Endothelial cell of umbilical vein (primary cell): ENCODE measurements at regions of chr17 and their contacts with region 1.

Region 1: GRCh38 chr17:38982858-38983746 is 15.9 kb upstream of the FBXO47 start:
- DNase-seq: peak; percentile 74
- H3K4me3 ChIP-seq: no peak overlapping the region
- H3K27ac ChIP-seq: no peak overlapping the region
- H3K4me1 ChIP-seq: no peaks in the 10 kb centered on the region
- H3K27me3 ChIP-seq: no peaks in the 10 kb centered on the region
- CTCF ChIP-seq: peak; percentile 62 to 63
- POLR2A ChIP-seq: no peak

Region 2: DNA sequence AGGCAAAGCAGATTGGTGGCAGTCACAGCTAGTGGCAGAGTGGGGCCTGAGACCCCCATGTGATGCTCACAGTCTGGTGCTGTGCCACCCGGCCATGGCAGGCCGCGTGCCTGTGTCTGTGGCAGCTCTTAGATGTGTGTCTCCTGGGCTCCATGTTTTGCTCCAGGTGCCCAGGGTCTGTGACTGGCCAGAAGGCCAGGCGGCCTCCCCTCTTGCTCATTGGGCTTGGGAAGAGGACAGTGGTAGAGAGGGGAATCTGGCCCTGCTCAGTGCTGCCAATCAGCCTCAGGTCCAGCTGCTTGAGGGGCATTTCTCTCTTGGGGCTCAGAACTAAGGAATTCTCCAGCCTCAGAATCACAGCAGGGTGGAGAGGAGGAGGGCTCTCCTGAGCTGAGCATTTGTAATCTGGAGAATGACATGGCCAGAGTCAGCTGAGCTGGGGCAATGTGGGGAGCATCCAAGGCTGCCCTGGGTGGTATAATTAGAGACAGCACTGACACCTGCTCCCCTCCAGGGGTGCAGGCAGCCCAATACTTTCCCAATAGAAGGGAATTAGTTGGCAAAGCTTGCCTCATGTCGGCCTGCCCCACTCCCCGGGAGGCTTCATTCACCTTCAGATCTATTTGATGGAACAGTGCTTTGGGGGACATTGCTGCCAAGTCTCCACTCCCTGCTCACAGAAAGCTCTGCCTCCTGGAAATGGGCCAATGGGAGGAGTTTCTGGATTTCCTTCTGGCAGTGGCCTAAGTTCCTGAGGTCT is 60.4 kb before region 1 on chr17:
- CTCF ChIA-PET with region 1: interaction called, 41 read pairs
- POLR2A ChIA-PET with region 1: no interaction called
- dilution Hi-C with region 1: no loop called
- intact Hi-C with region 1: no loop called
- DNase-seq: peak; percentile 67
- H3K4me3 ChIP-seq: no peak overlapping the region
- H3K27ac ChIP-seq: no peak overlapping the region
- H3K4me1 ChIP-seq: no peaks in the 10 kb centered on the region
- H3K27me3 ChIP-seq: no peaks in the 10 kb centered on the region
- CTCF ChIP-seq: peak in 1 of 2 donors; percentile 9
- POLR2A ChIP-seq: peak; percentile 16

Region 3: DNA sequence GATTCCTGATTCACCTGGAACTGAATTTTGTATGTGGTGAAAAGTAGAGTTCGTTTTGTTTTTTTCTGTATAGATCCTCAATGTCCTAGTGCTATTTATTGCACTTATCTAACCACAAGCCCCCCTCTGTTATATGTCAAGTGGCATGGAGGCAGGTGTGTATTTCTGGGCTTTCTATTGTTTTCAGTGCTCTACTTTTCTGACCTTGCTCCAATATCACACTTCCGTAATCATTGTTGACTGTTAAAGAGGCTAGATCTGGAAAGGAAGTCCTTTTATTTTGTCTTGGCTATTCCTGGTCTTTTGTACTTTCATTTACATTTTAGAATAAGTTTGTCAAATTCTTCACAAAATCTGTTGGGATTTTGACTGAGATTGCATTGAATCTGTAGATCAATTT is 10.9 kb after region 1 on chr17:
- CTCF ChIA-PET with region 1: interaction called, 22 read pairs
- POLR2A ChIA-PET with region 1: no interaction called
- dilution Hi-C with region 1: no loop called
- intact Hi-C with region 1: no loop called
- DNase-seq: peak; percentile 57
- H3K4me3 ChIP-seq: no peak overlapping the region
- H3K27ac ChIP-seq: no peak overlapping the region
- H3K4me1 ChIP-seq: peaks cover 6% of the 10 kb centered on the region
- H3K27me3 ChIP-seq: no peaks in the 10 kb centered on the region
- CTCF ChIP-seq: no peak
- POLR2A ChIP-seq: no peak

Region 4: DNA sequence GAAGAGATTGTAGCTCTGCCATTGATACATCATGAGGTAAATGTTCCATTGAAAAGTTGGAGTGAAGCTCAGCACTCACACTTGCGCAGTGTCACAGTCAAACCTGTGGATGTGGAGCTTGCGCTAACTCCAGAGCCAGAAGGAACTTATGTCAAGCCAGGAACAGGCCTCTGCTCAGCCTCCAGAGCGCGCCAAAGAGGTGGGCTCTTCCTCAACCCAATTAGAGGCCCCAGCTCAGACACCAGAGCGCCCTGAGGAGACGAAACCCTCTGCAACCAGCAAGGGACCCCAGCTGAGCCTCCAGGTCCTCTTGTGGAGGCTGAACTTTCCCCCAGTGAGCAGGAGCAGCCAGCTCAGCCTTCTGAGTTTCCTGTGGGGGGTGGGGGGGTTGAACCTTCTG is 45.6 kb after region 1 on chr17:
- CTCF ChIA-PET with region 1: interaction called, 14 read pairs
- POLR2A ChIA-PET with region 1: no interaction called
- dilution Hi-C with region 1: no loop called
- intact Hi-C with region 1: no loop called
- DNase-seq: no peak
- H3K4me3 ChIP-seq: no peak overlapping the region
- H3K27ac ChIP-seq: no peak overlapping the region
- H3K4me1 ChIP-seq: no peaks in the 10 kb centered on the region
- H3K27me3 ChIP-seq: peaks cover 26 to 31% of the 10 kb centered on the region in 2 experiments
- CTCF ChIP-seq: no peak
- POLR2A ChIP-seq: no peak

Region 5: DNA sequence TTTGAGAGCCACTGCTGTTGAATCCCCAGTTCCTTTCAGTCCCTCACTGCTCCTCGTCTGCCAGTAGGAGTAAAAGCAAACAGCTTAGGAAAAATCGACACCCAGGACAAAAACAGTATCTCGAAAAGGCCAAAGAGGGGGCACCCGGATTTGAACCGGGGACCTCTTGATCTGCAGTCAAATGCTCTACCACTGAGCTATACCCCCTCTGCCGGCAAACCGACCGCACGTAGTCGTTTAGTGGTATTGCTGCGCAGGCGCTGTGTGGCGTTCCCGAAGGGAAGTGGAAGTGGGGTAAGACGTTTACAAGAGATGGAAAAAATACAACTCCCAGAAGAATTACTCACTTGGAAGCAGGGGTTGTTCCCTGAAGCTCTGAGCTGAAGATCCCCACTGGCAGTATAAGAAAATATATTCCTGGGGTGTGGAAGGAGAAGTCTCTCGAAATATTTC is 170.5 kb after region 1 on chr17:
- CTCF ChIA-PET with region 1: interaction called, 550 read pairs
- POLR2A ChIA-PET with region 1: interaction called, 6 read pairs
- dilution Hi-C with region 1: no loop called
- intact Hi-C with region 1: loop called (anchors 1 kb)
- DNase-seq: peak; percentile 93
- H3K4me3 ChIP-seq: peak overlapping the region; percentile 35 to 82 (median 68)
- H3K27ac ChIP-seq: peak overlapping the region; percentile 0
- H3K4me1 ChIP-seq: peaks cover 8% of the 10 kb centered on the region
- H3K27me3 ChIP-seq: peaks cover 19 to 27% of the 10 kb centered on the region in 2 experiments
- CTCF ChIP-seq: peak in 1 of 2 donors; percentile 4
- POLR2A ChIP-seq: no peak

Region 6: DNA sequence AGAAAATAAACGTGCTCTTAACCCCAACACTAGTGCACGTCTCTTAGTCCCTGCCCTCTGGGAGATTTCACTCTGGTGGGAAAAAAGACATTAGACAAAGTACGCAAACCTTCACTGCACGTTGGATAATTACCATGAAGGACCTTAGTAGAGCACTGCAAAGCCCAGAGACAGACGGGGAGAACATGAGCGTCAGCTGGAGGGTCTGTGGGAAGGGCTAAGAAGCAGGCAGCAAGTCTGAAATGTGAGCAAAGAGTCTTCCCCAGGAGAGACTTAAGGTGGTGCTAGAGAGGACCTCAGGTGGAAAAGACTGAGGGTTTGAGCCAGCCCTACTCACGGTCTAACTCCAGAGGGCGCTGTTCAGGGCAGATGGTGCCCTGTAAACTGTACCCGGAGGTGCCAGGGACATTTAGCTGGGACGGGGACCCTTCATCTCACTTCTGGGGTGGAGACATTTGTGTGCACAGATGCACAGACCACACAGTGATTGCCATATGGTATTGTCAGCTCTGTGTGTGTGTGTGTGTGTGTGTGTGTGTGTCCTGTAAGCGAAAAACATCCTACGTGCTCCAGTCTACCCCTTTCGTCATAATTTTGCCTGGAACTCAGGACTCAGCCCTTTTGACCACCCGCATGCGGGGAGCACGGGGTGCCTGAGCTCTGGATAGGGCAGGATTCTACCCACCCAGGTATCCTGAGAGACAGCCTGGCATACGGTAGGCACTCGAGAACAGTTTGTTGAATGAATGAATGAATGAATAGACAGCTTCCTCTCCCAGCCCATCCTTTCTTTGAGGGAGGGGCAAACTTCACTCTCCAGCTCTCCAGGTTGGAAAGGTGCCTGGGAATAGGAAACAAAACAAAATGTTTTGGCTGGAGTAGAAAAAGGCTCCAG is 252.7 kb after region 1 on chr17:
- CTCF ChIA-PET with region 1: interaction called, 52 read pairs
- POLR2A ChIA-PET with region 1: no interaction called
- dilution Hi-C with region 1: no loop called
- intact Hi-C with region 1: no loop called
- DNase-seq: peak; percentile 53
- H3K4me3 ChIP-seq: no peak overlapping the region
- H3K27ac ChIP-seq: no peak overlapping the region
- H3K4me1 ChIP-seq: peaks cover 3% of the 10 kb centered on the region
- H3K27me3 ChIP-seq: peaks cover 4 to 5% of the 10 kb centered on the region in 2 experiments
- CTCF ChIP-seq: peak; percentile 83 to 85
- POLR2A ChIP-seq: no peak